ENCODE measurements at regions of chr12 and their contacts with region 1.

Region 1: DNA sequence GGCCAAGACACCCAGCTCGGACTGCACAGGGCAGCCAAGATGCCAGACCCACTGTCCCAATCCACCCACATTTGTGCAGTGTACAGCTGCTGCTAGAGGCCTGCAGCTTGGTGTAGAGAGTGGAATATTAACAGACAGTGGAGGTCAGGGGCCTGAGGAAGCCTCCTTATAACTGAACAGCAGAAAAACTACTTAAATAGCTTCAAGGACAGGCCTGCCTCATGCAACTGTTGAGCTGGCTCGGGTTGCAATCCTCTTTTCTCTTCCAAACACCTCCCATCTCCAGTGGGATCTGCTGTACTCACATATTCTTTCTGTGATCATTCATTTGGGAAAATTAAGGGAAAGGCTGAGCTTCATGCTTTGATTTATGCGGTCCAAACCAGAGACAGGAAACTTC is 1043.2 kb upstream of the TMEM132C start:
- DNase-seq: no peak
- ATAC-seq: no peak
- H3K4me3 ChIP-seq: no peak overlapping the region
- H3K27ac ChIP-seq: no peak overlapping the region
- H3K4me1 ChIP-seq: no peaks in the 10 kb centered on the region
- H3K27me3 ChIP-seq: peaks cover 0 to 23% (median 0%) of the 10 kb centered on the region in 7 donors
- CTCF ChIP-seq: no peak

Region 2: DNA sequence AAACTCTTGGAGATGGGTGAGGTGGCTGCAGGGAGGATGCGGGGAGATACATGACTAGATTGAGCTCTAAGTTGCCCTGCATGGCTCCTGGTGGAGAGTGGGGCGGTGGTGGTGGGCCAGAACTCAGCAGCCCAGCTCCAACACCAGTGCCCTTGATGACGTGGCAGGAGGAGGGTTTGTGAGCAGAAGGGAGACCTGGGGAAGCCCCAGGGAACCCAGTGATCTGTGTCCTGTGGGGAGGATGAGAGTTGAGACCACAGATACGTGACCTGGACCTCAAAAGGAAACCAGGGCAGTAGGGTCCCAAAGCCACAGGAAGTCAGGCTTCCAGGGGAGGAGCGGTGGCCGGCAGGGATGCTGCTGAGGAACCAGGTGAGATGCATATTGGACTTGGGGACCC is 54.1 kb after region 1 on chr12:
- intact Hi-C with region 1: loop called in 1 of 10 experiments (anchors 2 kb)
- DNase-seq: no peak
- ATAC-seq: no peak
- H3K4me3 ChIP-seq: no peak overlapping the region
- H3K27ac ChIP-seq: no peak overlapping the region
- H3K4me1 ChIP-seq: no peaks in the 10 kb centered on the region
- H3K27me3 ChIP-seq: peaks cover 0 to 60% (median 34%) of the 10 kb centered on the region in 7 donors
- CTCF ChIP-seq: no peak